ENCODE measurements at regions of chr20 and their contacts with region 1.

Region 1: DNA sequence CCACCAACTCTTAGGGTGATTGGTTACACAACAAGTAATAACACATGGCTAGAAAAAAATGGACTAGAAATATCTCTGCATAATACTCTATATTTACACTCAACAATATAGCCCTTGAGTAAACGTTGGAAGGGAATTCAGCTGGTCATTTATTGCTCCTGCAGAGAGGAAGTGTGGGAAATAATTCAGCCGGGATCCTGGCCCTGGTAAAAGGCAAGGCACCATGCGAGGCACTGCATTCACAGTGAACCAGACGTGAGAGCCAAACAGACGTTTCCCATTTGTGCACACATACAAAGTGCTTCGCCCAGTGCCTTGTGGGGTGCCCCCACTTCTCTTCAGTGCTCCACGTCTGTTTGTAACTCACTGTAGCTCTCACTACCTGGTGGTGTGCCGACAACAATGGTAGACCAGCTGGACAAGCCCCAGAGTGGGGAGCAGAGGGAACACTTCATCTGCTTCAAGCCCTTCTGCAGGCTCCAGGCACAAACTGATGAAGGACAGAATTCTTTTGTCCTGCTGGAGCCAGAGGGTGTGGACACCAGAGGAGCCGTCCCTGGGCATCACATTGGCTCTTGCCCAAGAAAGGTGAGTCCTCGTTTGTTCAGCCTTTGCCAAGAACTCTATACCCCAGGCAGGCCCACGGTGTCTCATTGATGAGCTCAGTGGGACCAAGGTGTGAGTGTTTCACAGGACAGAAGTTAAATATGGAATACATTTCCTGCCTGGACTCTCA is 18.8 kb downstream of the SYNDIG1 start:
- DNase-seq: no peak
- H3K4me3 ChIP-seq: no peak overlapping the region
- H3K27ac ChIP-seq: no peak overlapping the region
- H3K4me1 ChIP-seq: no peaks in the 10 kb centered on the region
- H3K27me3 ChIP-seq: no peaks in the 10 kb centered on the region
- CTCF ChIP-seq: no peak
- EP300 ChIP-seq: no peak
- POLR2A ChIP-seq: no peak

Region 2: DNA sequence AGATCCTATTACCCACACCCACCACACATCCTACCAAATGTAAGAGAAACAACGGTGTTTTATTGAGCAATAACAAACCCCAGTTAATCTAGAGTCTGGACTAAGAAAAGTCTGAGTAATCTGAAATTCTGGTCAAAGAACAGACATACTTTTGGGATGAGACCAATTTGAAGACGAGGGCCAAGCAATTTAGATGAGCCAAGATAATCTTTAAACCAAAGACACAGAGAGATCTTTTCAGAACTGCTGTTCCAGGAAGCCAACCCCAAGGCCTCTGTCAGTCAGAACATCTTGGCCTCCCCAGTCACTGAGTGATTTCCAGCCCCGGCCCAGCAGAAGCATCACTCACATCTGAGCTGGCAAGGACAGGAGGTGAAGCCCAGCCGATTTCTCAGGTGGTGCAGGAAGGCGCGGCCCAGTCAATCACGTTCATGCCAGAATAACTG is 137.3 kb before region 1 on chr20:
- intact Hi-C with region 1: no loop called
- DNase-seq: no peak
- H3K4me3 ChIP-seq: no peak overlapping the region
- H3K27ac ChIP-seq: no peak overlapping the region
- H3K4me1 ChIP-seq: peaks cover 4% of the 10 kb centered on the region
- H3K27me3 ChIP-seq: no peaks in the 10 kb centered on the region
- CTCF ChIP-seq: no peak
- EP300 ChIP-seq: no peak
- POLR2A ChIP-seq: no peak

Region 3: DNA sequence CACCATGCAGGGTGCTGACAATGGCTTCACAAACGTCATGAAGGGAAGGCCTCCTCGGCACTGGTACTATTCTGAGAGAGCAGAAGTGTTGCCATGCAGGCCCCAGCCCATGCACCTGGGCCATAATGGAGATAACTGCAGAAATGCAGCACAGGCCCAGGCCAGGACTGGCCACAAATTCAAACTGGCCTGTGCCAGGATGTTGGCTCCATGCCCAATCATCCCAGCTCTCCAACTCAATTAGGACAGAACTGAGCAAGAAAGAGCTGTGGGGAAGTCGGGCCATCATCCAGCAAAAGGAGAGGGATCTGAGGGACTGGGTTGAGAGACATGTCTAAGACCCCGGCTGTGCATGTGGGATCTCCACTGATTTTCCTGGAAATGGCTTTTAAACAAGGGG is 67.7 kb before region 1 on chr20:
- intact Hi-C with region 1: loop called in 1 of 4 experiments (anchors 10 kb)
- DNase-seq: no peak
- H3K4me3 ChIP-seq: no peak overlapping the region
- H3K27ac ChIP-seq: no peak overlapping the region
- H3K4me1 ChIP-seq: no peaks in the 10 kb centered on the region
- H3K27me3 ChIP-seq: no peaks in the 10 kb centered on the region
- CTCF ChIP-seq: no peak
- EP300 ChIP-seq: no peak
- POLR2A ChIP-seq: no peak